PC-9 (cell line): ENCODE measurements at regions of chr3 and their contacts with region 1.

Region 1: DNA sequence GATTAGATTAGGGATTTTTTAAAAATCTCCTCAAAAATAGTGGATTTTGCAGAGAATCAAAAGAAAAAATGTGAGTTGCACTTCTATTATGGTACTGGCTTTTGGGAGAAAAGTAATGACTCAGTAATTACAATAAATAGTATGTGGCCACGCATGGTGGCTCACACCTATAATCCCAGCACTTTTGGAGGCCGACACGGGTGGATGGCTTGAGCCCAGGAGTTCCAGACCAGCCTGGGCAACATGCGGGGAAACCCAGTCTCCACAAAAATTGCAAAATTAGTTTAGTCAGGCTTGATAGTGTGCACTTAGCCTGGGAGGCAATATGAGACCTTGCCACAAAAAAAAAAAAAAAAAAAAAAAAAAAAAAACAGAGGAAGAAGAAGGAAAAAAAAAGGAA is 1098.2 kb downstream of the ZPLD1 start:
- DNase-seq: no peak
- H3K4me3 ChIP-seq: no peak overlapping the region
- H3K27ac ChIP-seq: no peak overlapping the region
- H3K4me1 ChIP-seq: no peaks in the 10 kb centered on the region
- H3K27me3 ChIP-seq: no peaks in the 10 kb centered on the region
- CTCF ChIP-seq: no peak

Region 2: GRCh38 chr3:103406320-103406850 is 126.6 kb before region 1 on chr3:
- CTCF ChIA-PET with region 1: no interaction called
- POLR2A ChIA-PET with region 1: interaction called, 21 read pairs
- intact Hi-C with region 1: no loop called
- DNase-seq: no peak
- H3K4me3 ChIP-seq: no peak overlapping the region
- H3K27ac ChIP-seq: no peak overlapping the region
- H3K4me1 ChIP-seq: no peaks in the 10 kb centered on the region
- H3K27me3 ChIP-seq: no peaks in the 10 kb centered on the region
- CTCF ChIP-seq: no peak